ENCODE measurements at regions of chr17 and their contacts with region 1.

Region 1: GRCh38 chr17:17812211-17813057 is 24.4 kb downstream of the SREBF1 start:
- DNase-seq: peak; percentile 70 to 72
- H3K4me3 ChIP-seq: no peak overlapping the region
- H3K27ac ChIP-seq: peak overlapping the region in 2 of 3 donors; percentile 8 to 11
- H3K4me1 ChIP-seq: peaks cover 32 to 58% of the 10 kb centered on the region in 2 donors
- H3K27me3 ChIP-seq: no peaks in the 10 kb centered on the region
- CTCF ChIP-seq: peak; percentile 97 to 100 (median 98)
- POLR2A ChIP-seq: no peak

Region 2: DNA sequence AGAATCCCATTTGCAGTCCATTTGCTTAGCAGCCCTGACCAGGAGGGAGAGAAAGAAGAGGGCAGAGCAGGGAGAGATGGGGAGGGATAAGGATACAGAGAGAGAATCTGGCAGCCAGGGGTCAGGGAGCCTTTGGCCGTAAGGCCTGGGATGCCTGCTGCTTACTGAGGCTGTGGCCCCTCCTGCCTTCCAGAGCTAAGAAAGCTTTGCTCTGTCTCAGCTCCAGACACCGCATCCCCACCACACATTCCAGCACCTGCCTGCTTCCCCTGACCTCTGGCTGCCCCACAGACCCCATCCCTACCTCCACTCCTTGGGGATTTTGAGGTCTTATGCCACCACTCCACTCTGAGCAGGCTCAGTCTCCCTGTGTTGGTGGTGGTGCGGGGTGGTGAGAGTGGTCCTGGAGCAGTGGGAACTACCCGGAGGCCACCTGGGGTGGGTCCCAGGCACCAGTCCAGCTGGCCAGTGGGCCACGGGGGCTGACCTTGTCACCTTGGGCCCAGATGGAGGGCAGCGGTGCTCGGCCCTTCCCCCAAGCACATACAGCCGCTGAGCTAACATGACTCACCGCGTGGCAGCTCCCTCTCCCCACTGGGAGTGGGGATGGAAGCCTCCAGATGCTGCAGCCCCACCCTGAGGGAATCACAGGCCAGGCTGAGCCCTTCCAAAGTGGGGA is 72.9 kb before region 1 on chr17:
- intact Hi-C with region 1: no loop called
- DNase-seq: peak in 1 of 2 donors; percentile 47
- H3K4me3 ChIP-seq: no peak overlapping the region
- H3K27ac ChIP-seq: peak overlapping the region in 2 of 3 donors; percentile 52 to 57
- H3K4me1 ChIP-seq: peaks cover 46 to 79% of the 10 kb centered on the region in 2 donors
- H3K27me3 ChIP-seq: no peaks in the 10 kb centered on the region
- CTCF ChIP-seq: no peak
- POLR2A ChIP-seq: no peak

Region 3: GRCh38 chr17:17859909-17860765 is 47.7 kb after region 1 on chr17:
- intact Hi-C with region 1: loop called (anchors 2 kb)
- DNase-seq: peak; percentile 76 to 84
- H3K4me3 ChIP-seq: no peak overlapping the region
- H3K27ac ChIP-seq: peak overlapping the region in 2 of 3 donors; percentile 46 to 49
- H3K4me1 ChIP-seq: peaks cover 32 to 44% of the 10 kb centered on the region in 2 donors
- H3K27me3 ChIP-seq: no peaks in the 10 kb centered on the region
- CTCF ChIP-seq: peak; percentile 92 to 99 (median 96)
- POLR2A ChIP-seq: no peak

Region 4: DNA sequence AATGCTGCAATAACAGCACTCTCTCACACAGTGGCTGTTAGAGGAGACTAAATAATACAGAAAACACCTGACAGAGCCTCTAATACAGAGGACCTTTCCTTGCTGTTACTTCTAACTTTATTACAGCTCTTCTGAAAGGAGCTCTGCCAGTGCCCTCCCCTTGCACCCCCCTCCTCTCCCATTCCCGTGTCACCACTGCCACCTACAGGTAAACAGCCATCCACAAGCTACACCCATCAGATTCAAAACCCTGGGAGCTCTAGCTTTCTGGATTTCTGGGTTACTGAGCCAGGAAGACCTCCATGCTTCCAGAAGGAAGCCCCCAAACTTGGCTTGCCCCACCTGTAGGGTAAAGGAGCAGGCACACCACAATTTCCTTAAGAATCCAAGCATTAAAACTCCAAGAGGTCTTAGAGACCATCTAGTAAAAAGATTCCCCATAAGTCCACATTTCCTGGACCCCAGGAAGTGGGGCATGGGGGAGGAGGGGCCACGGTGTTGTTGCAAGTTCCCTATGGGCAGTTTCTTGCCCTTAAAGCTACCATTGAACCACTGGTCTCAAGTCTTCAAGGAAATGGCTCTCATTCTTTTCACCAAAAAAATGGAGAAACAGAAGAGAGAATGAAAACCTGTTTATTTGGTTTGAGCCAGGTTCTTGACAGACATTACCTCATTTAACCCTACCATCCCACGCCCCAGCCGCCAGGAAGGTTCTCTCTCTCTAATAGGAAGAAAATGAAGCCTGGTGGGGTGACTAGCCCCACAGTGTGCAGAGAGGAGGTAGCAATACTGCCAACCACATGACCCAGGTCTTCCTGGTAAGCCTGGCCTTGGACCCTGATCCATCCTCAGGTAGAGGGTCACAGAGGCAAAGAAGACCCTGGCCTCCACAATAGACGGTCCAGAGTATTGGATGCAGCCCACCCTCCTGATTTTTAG is 107.0 kb after region 1 on chr17:
- intact Hi-C with region 1: loop called (anchors 10 kb)
- DNase-seq: peak; percentile 84 to 87
- H3K4me3 ChIP-seq: no peak overlapping the region
- H3K27ac ChIP-seq: peak overlapping the region; percentile 19 to 54 (median 20)
- H3K4me1 ChIP-seq: peaks cover 48 to 63% of the 10 kb centered on the region in 2 donors
- H3K27me3 ChIP-seq: no peaks in the 10 kb centered on the region
- CTCF ChIP-seq: peak; percentile 47 to 91 (median 84)
- POLR2A ChIP-seq: no peak